Common myeloid progenitor, CD34-positive (primary cell): ENCODE measurements at regions of chr2 and their contacts with region 1.

Region 1: GRCh38 chr2:25228848-25229278 is 60.5 kb upstream of the POMC start:
- DNase-seq: peak; percentile 73 to 88 (median 76)
- H3K4me3 ChIP-seq: peak overlapping the region in 1 of 7 experiments; percentile 16
- H3K27ac ChIP-seq: no peak overlapping the region
- H3K4me1 ChIP-seq: peaks cover 0 to 23% (median 10%) of the 10 kb centered on the region in 4 experiments
- H3K27me3 ChIP-seq: no peaks in the 10 kb centered on the region

Region 2: GRCh38 chr2:24971536-24972314 is 257.1 kb before region 1 on chr2 and contains the start of gene DNAJC27:
- CTCF ChIA-PET with region 1: interaction called, 24 read pairs
- POLR2A ChIA-PET with region 1: no interaction called
- DNase-seq: peak; percentile 98 to 99 (median 99)
- H3K4me3 ChIP-seq: peak within 1 kb of the TSS; percentile 76 to 94 (median 86)
- H3K27ac ChIP-seq: peak within 1 kb of the TSS; percentile 100
- H3K4me1 ChIP-seq: peaks cover 8 to 23% (median 16%) of the 10 kb centered on the region in 4 experiments
- H3K27me3 ChIP-seq: no peaks in the 10 kb centered on the region

Region 3: GRCh38 chr2:25165992-25166875 is 62.6 kb before region 1 on chr2:
- CTCF ChIA-PET with region 1: interaction called, 23 read pairs
- POLR2A ChIA-PET with region 1: no interaction called
- DNase-seq: peak; percentile 48 to 55 (median 49)
- H3K4me3 ChIP-seq: no peak overlapping the region
- H3K27ac ChIP-seq: no peak overlapping the region
- H3K4me1 ChIP-seq: peaks cover 0 to 23% (median 11%) of the 10 kb centered on the region in 4 experiments
- H3K27me3 ChIP-seq: peaks cover 18 to 58% (median 31%) of the 10 kb centered on the region in 5 experiments

Region 4: DNA sequence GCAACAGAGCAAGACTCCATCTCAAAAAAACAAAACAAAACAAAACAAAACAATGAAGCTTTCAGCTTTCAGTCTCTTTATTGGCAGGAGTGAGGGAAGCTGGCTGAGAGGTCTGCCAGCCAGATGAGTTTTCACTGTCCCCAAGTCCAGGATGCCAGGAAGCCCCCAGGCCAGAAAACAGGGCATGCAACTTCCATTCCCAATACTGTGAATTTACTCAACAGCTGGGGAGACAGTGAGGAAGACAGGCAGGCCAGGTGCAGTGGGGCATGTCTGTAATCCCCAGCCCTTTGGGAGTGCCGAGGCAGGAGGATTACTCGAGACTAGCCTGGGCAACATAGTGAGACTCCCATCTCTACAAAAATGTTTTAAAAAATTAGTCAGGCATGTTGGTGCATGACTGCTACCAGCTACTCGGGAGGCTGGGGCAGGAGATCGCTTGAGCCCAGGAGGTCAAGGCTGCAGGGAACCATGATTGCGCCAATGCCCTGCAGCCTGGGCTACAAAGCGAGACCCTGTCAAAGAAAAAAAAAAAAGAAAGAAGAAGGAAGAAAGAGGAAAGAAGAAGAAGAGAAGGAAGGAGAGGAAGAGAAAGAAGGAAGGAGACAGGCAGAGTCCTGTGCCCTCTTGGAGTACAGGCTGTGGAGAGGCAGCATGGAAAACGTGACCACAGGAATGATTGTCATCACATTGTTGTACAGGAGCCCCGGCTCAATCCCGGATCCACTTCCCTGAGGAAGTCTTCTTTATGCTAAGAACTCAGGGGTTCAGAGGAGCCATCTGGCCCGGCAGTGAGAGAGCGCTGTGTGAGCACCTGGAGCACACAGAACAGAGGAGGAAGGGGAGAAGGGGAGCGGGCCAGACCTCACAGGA is 31.3 kb before region 1 on chr2:
- CTCF ChIA-PET with region 1: interaction called, 21 read pairs
- POLR2A ChIA-PET with region 1: no interaction called
- DNase-seq: no peak
- H3K4me3 ChIP-seq: no peak overlapping the region
- H3K27ac ChIP-seq: no peak overlapping the region
- H3K4me1 ChIP-seq: peaks cover 0 to 22% (median 17%) of the 10 kb centered on the region in 4 experiments
- H3K27me3 ChIP-seq: no peaks in the 10 kb centered on the region

Region 5: DNA sequence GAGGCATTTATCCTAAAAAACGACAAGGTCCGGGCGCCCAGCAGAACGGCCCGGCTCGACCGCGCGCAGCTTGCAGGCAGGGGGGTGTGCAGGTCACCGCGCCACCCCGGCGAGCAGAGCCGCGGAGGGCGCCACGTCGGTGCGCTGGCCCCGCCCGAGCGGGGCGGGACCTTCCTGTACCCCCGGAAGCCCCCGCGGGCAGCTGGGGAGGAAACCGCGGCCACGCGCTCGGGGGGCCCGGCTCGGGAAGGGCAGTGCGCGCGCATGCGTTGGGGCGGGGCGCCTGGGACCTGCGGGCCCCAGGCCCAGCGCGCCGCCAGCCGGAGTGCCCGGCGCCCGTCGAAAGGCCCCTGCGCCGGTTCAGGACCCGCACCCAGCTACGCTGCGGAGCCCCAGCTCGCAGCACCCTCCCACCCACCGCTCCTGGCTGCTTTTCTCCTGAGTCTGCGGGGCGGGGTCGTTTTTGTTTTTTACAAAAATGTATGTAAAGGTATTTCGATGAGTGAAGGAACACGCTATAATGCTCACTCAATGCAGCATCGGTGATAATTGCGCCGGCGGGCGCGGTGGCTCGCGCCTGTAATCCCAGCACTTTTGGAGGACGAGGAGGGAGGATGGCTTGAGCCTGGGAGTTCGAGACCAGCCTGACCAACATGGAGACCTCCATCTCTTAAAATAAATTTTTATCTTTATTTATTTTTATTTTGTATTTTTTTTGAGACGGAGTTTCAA is 12.7 kb before region 1 on chr2:
- CTCF ChIA-PET with region 1: interaction called, 105 read pairs
- POLR2A ChIA-PET with region 1: interaction called, 5 read pairs
- DNase-seq: peak; percentile 83 to 91 (median 88)
- H3K4me3 ChIP-seq: peak overlapping the region; percentile 28 to 80 (median 46)
- H3K27ac ChIP-seq: no peak overlapping the region
- H3K4me1 ChIP-seq: peaks cover 0 to 25% (median 22%) of the 10 kb centered on the region in 4 experiments
- H3K27me3 ChIP-seq: no peaks in the 10 kb centered on the region

Region 6: DNA sequence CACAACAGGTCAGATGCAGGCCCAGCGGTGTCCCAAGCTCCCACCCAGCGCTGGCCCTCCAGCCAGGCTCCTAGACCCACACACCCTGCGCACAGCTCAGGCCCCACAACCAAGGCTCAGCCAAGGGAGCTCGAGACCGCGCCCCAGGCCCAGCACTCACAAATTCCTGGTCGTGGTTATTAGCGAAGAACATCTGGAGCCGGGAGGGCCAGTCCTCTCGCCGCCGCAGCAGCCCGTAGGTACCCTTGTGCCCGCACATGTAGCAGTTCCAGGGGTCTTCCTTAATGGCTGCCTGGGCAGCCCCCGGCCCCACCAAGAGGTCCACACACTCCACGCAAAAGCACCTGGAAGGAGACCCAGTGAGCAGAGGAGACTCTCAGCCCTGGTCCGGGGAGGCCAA is 15.1 kb after region 1 on chr2:
- CTCF ChIA-PET with region 1: interaction called, 52 read pairs
- POLR2A ChIA-PET with region 1: no interaction called
- DNase-seq: no peak
- H3K4me3 ChIP-seq: no peak overlapping the region
- H3K27ac ChIP-seq: no peak overlapping the region
- H3K4me1 ChIP-seq: no peaks in the 10 kb centered on the region
- H3K27me3 ChIP-seq: no peaks in the 10 kb centered on the region

Region 7: DNA sequence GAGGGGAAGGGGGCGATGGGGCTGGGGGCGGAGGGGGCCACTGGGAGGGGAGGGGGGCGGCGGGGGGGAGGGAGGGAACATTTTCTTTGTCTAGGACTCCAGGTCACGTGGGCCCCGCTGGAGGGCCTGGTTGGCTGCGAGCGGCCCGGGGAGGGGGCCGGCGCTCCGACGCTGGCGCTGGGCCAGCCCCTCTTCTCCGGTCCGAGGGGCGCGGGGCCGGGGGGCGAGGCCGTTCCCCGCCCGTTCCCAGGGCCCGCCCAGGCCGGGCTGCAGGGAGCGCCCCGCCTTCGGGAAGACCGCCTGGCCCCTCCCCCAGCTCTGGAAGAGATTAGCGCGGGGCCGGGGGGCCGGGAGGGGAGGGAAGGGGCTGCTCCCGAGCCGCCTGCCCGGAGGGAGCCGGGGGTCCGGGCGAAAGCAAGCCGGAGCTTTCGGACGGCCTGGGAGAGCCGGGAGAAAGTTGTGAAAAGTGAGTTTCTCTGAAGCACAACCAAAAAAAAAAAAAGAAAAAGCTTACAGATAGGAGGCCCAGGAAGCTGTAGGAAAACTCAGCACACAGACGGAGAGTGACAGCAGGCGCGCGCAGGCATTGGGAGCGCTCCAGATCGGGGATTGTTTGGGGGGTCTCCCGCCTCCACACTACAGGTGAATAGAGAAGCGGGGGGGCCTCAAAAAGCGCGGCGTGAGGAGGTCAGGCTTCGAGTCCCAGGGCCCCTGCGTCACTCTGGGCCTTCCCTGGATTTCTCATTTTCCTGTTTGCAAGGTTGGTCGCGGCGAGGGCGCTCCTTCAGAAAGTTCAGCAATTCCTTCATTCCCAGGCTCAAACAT is 23.6 kb after region 1 on chr2:
- CTCF ChIA-PET with region 1: interaction called, 18 read pairs
- POLR2A ChIA-PET with region 1: no interaction called
- DNase-seq: peak; percentile 52 to 68 (median 63)
- H3K4me3 ChIP-seq: peak overlapping the region; percentile 12 to 79 (median 72)
- H3K27ac ChIP-seq: peak overlapping the region in 1 of 2 experiments; percentile 49
- H3K4me1 ChIP-seq: peaks cover 3 to 41% (median 38%) of the 10 kb centered on the region in 4 experiments
- H3K27me3 ChIP-seq: no peaks in the 10 kb centered on the region